K562 (cell line): ENCODE measurements at regions of chr13 and their contacts with region 1.

Region 1: DNA sequence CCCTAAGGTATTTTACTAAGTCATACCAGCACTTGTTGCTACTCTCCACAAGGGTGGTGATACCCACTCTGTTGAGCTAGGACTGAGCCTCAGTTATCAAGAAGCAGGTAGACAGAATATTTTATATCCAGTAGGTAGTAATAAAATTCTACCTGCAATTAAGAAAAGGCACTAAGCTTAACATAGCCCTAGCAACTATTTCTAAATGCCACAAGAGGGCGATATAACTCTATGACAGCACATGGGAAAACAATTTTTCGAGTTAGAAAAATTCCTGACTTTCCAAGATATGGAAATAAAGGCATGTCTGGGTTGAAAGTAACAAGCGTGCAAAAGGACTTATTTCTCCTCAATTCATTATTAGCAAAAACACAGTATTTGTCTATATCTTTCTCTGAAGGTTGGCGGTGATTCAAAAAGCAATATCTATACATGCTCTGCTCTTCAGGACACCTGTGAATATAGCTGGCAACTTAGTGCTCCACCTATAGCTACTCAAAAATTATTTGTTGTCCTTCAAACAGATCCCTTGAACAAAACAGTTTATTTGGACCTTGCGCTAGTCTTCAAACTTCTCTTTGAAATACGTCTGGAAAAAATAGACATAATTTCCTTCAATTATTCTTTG is 14.7 kb downstream of the CCDC169 start:
- DNase-seq: peak in 3 of 4 experiments; percentile 9 to 25 (median 14)
- ATAC-seq: peak; percentile 69
- H3K4me3 ChIP-seq: no peak overlapping the region
- H3K27ac ChIP-seq: no peak overlapping the region
- H3K4me1 ChIP-seq: no peaks in the 10 kb centered on the region
- H3K27me3 ChIP-seq: no peaks in the 10 kb centered on the region
- CTCF ChIP-seq: peak; percentile 46 to 71 (median 48); a peak in 4 of 6 replicates
- EP300 ChIP-seq: no peak
- POLR2A ChIP-seq: no peak
- RAD21 ChIP-seq: peak; percentile 66 to 74

Region 2: GRCh38 chr13:36395280-36395679 is 112.3 kb after region 1 on chr13:
- CTCF ChIA-PET with region 1: no interaction called
- POLR2A ChIA-PET with region 1: no interaction called
- in situ Hi-C with region 1: no loop called
- intact Hi-C with region 1: loop called (anchors 2 kb)
- DNase-seq: peak in 2 of 4 experiments; percentile 3 to 13
- ATAC-seq: peak; percentile 64
- H3K4me3 ChIP-seq: no peak overlapping the region
- H3K27ac ChIP-seq: no peak overlapping the region
- H3K4me1 ChIP-seq: no peaks in the 10 kb centered on the region
- H3K27me3 ChIP-seq: no peaks in the 10 kb centered on the region
- CTCF ChIP-seq: peak in 2 of 3 experiments; percentile 12 to 42; a peak in 2 of 6 replicates
- EP300 ChIP-seq: no peak
- POLR2A ChIP-seq: no peak
- RAD21 ChIP-seq: peak in 1 of 2 experiments; percentile 48; a peak in 2 of 4 replicates

Region 3: DNA sequence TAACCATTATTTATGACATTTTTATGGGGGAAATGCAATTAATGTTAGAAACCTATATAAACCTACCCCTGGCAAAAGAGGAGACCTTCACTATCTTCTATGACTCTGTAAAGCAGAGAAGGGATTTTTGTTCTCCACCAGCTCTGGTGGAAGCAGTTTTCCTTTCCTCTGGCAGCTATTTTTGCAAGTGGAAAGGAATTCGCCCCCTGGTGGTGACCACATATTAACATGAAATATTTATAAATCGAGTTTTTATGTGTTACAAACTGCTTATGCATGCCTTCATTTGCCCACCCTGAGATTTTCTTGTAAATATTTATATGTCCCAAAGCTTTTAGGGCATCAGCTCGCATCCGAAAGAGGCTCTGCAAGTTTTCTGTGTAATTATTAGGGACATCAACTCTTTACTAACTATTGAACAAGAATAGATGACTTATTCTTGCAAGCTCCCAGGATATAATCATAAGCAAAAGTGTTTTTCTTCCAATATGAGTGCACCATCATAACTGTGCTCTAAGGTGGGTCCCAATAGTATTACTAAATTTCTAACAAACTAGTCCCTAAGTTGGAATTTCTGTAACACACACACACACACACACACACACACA is 453.3 kb after region 1 on chr13:
- CTCF ChIA-PET with region 1: interaction called, 5 read pairs
- POLR2A ChIA-PET with region 1: no interaction called
- in situ Hi-C with region 1: loop called (anchors 10 kb)
- intact Hi-C with region 1: loop called (anchors 2 kb)
- DNase-seq: peak; percentile 30 to 57 (median 36)
- ATAC-seq: no peak
- H3K4me3 ChIP-seq: no peak overlapping the region
- H3K27ac ChIP-seq: no peak overlapping the region
- H3K4me1 ChIP-seq: no peaks in the 10 kb centered on the region
- H3K27me3 ChIP-seq: no peaks in the 10 kb centered on the region
- CTCF ChIP-seq: peak; percentile 37 to 64 (median 40); a peak in 4 of 6 replicates
- EP300 ChIP-seq: no peak
- POLR2A ChIP-seq: no peak
- RAD21 ChIP-seq: peak; percentile 33 to 46; a peak in 2 of 4 replicates

Region 4: DNA sequence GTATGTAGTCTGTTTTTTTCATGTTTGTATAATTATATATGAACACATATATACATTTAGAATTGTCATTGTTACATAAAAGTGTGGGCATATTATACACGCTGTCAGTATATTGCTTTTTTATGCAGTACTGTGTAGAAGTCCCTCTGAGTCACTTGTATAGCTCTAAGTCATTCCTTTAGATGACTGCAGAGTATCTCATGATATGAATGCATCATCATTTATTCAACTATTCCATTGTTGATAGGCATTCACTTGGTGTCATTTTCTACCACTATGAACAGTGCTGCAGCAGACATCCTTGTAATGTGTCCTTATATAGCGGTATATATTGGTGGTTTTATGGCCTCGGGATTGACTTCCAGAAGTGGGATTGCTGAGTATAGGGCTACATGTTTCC is 551.4 kb after region 1 on chr13:
- CTCF ChIA-PET with region 1: no interaction called
- POLR2A ChIA-PET with region 1: no interaction called
- in situ Hi-C with region 1: no loop called
- intact Hi-C with region 1: loop called (anchors 10 kb)
- DNase-seq: no peak
- ATAC-seq: no peak
- H3K4me3 ChIP-seq: no peak overlapping the region
- H3K27ac ChIP-seq: no peak overlapping the region
- H3K4me1 ChIP-seq: peaks cover 0 to 3% of the 10 kb centered on the region in 2 experiments; a peak in 2 of 5 replicates
- H3K27me3 ChIP-seq: no peaks in the 10 kb centered on the region
- CTCF ChIP-seq: no peak
- EP300 ChIP-seq: no peak
- POLR2A ChIP-seq: no peak
- RAD21 ChIP-seq: no peak